HEK293 (cell line): ENCODE measurements at regions of chr3 and their contacts with region 1.

Region 1: DNA sequence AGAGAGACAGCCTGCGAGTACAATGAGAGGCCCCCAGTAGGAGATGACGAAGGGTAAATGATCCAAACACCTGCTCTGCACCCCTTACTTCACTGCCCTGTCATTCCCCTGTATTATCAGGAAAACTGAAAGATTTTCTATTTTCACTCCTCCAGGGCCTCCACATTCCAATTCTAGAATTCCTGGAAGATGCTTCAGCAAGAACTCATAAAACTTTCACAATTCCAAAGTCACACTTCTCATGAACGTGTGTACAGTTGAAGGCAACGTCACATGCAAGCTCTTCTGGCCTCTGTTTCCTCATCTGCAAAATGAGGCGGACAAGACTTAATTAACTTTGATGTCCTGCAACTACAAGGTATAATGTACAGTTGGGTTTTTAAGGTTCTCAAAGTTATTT is 62.8 kb upstream of the SPATA12 start:
- H3K4me3 ChIP-seq: no peak overlapping the region
- H3K27ac ChIP-seq: no peak overlapping the region
- H3K4me1 ChIP-seq: no peaks in the 10 kb centered on the region
- CTCF ChIP-seq: no peak

Region 2: GRCh38 chr3:56980798-56981390 is 16.8 kb before region 1 on chr3:
- CTCF ChIA-PET with region 1: interaction called, 12 read pairs
- POLR2A ChIA-PET with region 1: no interaction called
- H3K4me3 ChIP-seq: no peak overlapping the region
- H3K27ac ChIP-seq: no peak overlapping the region
- H3K4me1 ChIP-seq: no peaks in the 10 kb centered on the region; the same call in 1 of the 2 replicates
- CTCF ChIP-seq: no peak

Region 3: GRCh38 chr3:57007513-57008460 is 10.1 kb after region 1 on chr3:
- CTCF ChIA-PET with region 1: interaction called, 40 read pairs
- POLR2A ChIA-PET with region 1: no interaction called
- H3K4me3 ChIP-seq: no peak overlapping the region
- H3K27ac ChIP-seq: no peak overlapping the region; the same call in 1 of the 2 replicates
- H3K4me1 ChIP-seq: peaks cover 4% of the 10 kb centered on the region; the same call in 1 of the 2 replicates
- CTCF ChIP-seq: no peak

Region 4: GRCh38 chr3:57068437-57069089 is 70.9 kb after region 1 on chr3:
- CTCF ChIA-PET with region 1: interaction called, 16 read pairs
- POLR2A ChIA-PET with region 1: no interaction called
- H3K4me3 ChIP-seq: no peak overlapping the region
- H3K27ac ChIP-seq: no peak overlapping the region
- H3K4me1 ChIP-seq: peaks cover 5% of the 10 kb centered on the region
- CTCF ChIP-seq: no peak

Region 5: DNA sequence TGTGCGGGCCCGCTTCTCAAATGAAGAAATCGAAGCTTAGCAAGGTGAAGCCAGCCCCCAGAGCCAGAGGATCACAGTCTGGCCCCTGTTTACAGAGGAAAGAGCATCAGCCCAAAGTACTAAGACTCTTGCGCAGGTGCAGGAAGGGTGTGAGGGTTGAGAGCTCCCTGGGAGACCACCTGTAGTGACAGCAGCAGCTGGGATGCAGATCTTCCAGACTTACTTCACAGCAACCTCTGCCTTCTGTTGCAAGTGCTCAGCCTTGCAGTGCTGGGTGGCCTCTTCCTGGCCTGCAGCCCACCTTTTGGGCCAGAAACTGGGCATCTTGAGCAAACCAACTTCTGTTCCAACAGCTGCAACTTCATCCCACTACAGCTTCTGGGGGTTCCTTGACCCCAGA is 82.5 kb after region 1 on chr3:
- CTCF ChIA-PET with region 1: interaction called, 10 read pairs
- POLR2A ChIA-PET with region 1: interaction called, 4 read pairs
- H3K4me3 ChIP-seq: no peak overlapping the region
- H3K27ac ChIP-seq: no peak overlapping the region
- H3K4me1 ChIP-seq: no peaks in the 10 kb centered on the region; the same call in 1 of the 2 replicates
- CTCF ChIP-seq: no peak

Region 6: DNA sequence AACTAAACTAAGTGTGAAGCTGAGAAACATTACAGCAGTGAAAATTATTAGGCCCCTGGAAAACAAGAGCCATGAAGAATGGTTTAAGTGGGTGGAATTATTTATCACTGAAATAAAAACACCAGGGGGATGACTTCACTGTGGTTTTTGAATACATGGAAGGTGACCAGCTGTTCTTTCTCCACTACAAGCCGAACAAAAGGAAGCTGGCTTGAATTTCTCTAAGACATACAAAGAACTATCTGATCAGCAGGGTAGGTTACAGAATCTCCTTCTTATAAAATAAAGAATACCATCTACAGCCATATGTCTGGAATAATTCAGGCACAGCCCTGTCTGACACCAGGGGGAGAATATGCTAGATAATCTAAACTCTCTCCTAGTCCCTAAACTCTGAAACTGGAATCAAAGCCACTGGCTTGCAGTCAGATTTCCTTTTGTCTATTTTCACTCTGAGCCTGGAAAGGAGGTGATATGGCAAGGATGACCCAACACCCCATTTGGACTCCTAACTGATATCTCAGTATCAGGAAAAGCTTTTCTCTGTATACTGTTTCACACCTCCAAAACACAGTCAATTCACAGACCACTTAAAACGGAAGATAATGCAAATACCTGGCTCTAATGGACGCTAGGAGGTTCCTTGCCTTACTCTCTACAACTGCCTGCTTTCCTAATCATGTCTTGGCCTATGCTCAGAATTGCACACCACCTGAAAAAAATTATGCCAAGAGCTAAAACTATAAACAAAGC is 94.0 kb after region 1 on chr3:
- CTCF ChIA-PET with region 1: interaction called, 10 read pairs
- POLR2A ChIA-PET with region 1: no interaction called
- H3K4me3 ChIP-seq: no peak overlapping the region
- H3K27ac ChIP-seq: no peak overlapping the region
- H3K4me1 ChIP-seq: no peaks in the 10 kb centered on the region
- CTCF ChIP-seq: no peak